ENCODE measurements at regions of chr17 and their contacts with region 1.

Region 1: GRCh38 chr17:20315821-20316220 is 151.5 kb downstream of the LGALS9B start:
- DNase-seq: no peak
- H3K4me3 ChIP-seq: no peak overlapping the region
- H3K4me3 Mint-ChIP-seq: no peak overlapping the region
- H3K27ac ChIP-seq: no peak overlapping the region
- H3K27ac Mint-ChIP-seq: no peak overlapping the region
- H3K4me1 ChIP-seq: no peaks in the 10 kb centered on the region
- H3K4me1 Mint-ChIP-seq: peaks cover 6% of the 10 kb centered on the region
- H3K27me3 ChIP-seq: no peaks in the 10 kb centered on the region
- H3K27me3 Mint-ChIP-seq: peaks cover 4 to 5% (median 5%) of the 10 kb centered on the region in 3 donors
- CTCF ChIP-seq: no peak

Region 2: GRCh38 chr17:20226814-20227482 is 88.9 kb before region 1 on chr17:
- intact Hi-C with region 1: loop called (anchors 2 to 5 kb)
- DNase-seq: peak; percentile 50 to 64 (median 54)
- H3K4me3 ChIP-seq: no peak overlapping the region
- H3K4me3 Mint-ChIP-seq: no peak overlapping the region
- H3K27ac ChIP-seq: peak overlapping the region in 1 of 2 donors; percentile 34
- H3K27ac Mint-ChIP-seq: peak overlapping the region in 3 of 7 donors; percentile 62 to 70 (median 69)
- H3K4me1 ChIP-seq: peaks cover 2 to 18% of the 10 kb centered on the region in 2 donors
- H3K4me1 Mint-ChIP-seq: peaks cover 22% of the 10 kb centered on the region
- H3K27me3 ChIP-seq: no peaks in the 10 kb centered on the region
- H3K27me3 Mint-ChIP-seq: no peaks in the 10 kb centered on the region
- CTCF ChIP-seq: peak; percentile 83